OCI-LY7 (cell line): ENCODE measurements at regions of chr13 and their contacts with region 1.

Region 1: GRCh38 chr13:26872525-26873385 is 112.2 kb upstream of the GPR12 start:
- DNase-seq: peak; percentile 62
- H3K4me3 ChIP-seq: no peak overlapping the region
- H3K27ac ChIP-seq: no peak overlapping the region
- H3K4me1 ChIP-seq: no peaks in the 10 kb centered on the region
- CTCF ChIP-seq: peak; percentile 91

Region 2: DNA sequence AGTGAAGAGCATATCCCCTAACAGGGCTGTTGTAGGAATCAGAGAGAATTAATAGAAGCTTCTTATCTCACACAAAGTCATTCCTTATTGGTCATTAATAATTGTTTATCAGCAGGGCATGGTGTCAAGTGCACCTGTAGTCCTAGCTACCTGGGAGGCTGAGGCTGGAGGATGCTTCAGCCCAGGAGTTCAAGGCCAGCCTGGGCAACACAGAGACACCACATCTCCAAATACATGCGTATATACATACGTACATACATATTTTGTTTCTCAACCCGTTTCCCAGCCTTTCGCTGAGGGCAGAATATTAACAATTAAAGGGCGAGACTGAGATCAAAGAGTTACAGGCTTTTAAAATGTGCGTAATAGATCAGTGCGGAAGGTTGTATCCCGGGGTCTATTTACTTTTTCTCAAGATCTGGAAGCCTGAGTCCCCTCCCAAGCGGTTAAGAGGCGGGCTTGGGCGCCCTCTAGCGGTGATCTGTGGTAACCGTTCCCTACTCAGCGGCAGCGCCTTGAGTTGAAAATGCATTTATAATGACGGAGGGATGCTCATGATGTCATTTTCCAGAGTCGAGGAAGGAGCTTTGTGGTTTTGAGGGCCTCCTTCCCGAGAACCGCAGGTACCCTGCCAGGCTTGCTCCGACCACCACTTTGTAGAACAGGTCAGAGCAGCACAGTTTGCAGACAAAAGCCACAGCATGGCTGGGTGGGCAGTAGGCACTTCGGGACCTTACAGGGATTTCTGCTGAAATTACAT is 57.4 kb after region 1 on chr13:
- CTCF ChIA-PET with region 1: no interaction called
- POLR2A ChIA-PET with region 1: no interaction called
- intact Hi-C with region 1: loop called (anchors 1 kb)
- DNase-seq: peak; percentile 72
- H3K4me3 ChIP-seq: peak overlapping the region; percentile 33
- H3K27ac ChIP-seq: no peak overlapping the region
- H3K4me1 ChIP-seq: peaks cover 5% of the 10 kb centered on the region
- CTCF ChIP-seq: peak; percentile 98

Region 3: DNA sequence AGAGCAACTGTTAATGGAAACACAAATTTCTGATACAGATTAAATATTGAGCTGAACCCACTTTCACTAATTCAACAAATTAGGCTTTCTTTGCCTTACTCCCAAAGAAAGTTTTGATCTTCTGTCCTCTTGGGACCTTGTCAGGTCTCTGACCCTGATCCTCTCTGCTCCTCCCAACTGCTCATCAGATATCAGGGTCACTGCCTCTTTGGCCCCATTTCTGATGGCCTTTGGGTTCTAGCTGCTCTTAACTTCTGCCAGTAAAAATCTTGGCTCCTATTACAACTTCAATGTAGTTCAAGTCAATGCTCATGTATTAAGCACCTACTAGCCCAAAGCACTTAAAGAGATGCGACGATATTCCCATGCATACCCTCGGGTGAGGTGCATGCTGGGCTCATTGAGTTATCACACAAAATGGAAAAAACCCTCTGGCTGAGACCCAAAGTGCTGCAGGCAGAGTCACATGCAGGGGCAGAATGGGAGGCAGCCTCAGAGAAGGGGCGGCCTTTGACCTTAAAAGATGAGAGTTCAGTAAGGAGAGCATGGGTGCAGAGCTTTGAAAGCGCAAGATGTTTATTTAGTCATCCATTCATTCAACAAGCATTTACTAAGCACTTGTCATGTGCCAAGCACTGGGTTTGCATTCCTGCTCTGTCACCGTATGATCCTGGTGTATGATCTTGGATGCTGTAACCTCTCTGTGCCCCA is 115.5 kb after region 1 on chr13:
- CTCF ChIA-PET with region 1: no interaction called
- POLR2A ChIA-PET with region 1: no interaction called
- intact Hi-C with region 1: no loop called
- DNase-seq: no peak
- H3K4me3 ChIP-seq: no peak overlapping the region
- H3K27ac ChIP-seq: no peak overlapping the region
- H3K4me1 ChIP-seq: no peaks in the 10 kb centered on the region
- CTCF ChIP-seq: no peak